ENCODE measurements at regions of chr2 and their contacts with region 1.

Region 1: GRCh38 chr2:158034199-158034866 is 67.3 kb upstream of the UPP2 start:
- DNase-seq: no peak
- ATAC-seq: peak in 1 of 2 donors; percentile 50
- H3K4me3 ChIP-seq: no peak overlapping the region
- H3K27ac ChIP-seq: no peak overlapping the region
- H3K4me1 ChIP-seq: no peaks in the 10 kb centered on the region
- H3K27me3 ChIP-seq: no peaks in the 10 kb centered on the region
- CTCF ChIP-seq: peak in 2 of 5 experiments; percentile 18 to 19
- POLR2A ChIP-seq: no peak

Region 2: DNA sequence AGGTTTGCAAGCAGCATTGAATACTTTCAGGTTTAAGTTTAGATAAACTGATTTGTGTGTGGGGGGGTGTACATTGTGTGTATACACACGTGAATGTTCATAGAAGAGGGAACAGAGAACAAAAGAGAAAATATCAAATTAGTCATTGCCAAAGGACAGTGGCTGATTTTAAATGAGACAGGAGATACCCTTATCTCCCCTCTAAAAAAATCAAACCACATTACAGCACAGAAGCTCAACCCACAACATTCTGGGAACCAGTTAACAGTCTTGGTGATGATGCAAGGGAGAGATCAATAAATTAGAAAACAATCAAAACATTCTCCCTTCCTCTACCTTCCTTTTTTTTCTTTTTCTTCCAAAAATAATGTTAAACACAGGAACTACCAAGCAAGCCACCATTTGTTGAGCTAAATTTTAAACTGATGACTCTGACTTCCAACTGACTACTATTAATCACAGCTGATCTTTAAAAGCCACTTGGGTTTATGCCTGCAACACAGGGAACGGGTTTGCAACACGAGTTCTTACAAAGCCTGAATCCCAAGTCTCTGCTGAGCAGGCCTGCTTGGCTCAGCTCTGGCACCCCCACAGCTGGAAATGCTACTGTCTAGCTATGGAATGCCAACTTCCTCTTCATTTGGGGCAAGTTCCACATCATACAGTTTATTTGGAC is 286.5 kb before region 1 on chr2:
- in situ Hi-C with region 1: no loop called
- intact Hi-C with region 1: no loop called
- DNase-seq: peak; percentile 34 to 55
- ATAC-seq: peak; percentile 79 to 82
- H3K4me3 ChIP-seq: no peak overlapping the region
- H3K27ac ChIP-seq: peak overlapping the region; percentile 3 to 71 (median 32)
- H3K4me1 ChIP-seq: peaks cover 33 to 64% of the 10 kb centered on the region in 2 donors
- H3K27me3 ChIP-seq: no peaks in the 10 kb centered on the region
- CTCF ChIP-seq: no peak
- POLR2A ChIP-seq: no peak

Region 3: GRCh38 chr2:157952558-157952957 is 81.8 kb before region 1 on chr2:
- in situ Hi-C with region 1: no loop called
- intact Hi-C with region 1: no loop called
- DNase-seq: no peak
- ATAC-seq: no peak
- H3K4me3 ChIP-seq: no peak overlapping the region
- H3K27ac ChIP-seq: no peak overlapping the region
- H3K4me1 ChIP-seq: no peaks in the 10 kb centered on the region
- H3K27me3 ChIP-seq: no peaks in the 10 kb centered on the region
- CTCF ChIP-seq: no peak
- POLR2A ChIP-seq: no peak

Region 4: GRCh38 chr2:158060862-158061435 is 26.6 kb after region 1 on chr2:
- in situ Hi-C with region 1: no loop called
- intact Hi-C with region 1: no loop called
- DNase-seq: no peak
- ATAC-seq: no peak
- H3K4me3 ChIP-seq: no peak overlapping the region
- H3K27ac ChIP-seq: no peak overlapping the region
- H3K4me1 ChIP-seq: no peaks in the 10 kb centered on the region
- H3K27me3 ChIP-seq: no peaks in the 10 kb centered on the region
- CTCF ChIP-seq: no peak
- POLR2A ChIP-seq: no peak

Region 5: GRCh38 chr2:158745044-158745865 is 710.9 kb after region 1 on chr2:
- in situ Hi-C with region 1: loop called (anchors 5 to 10 kb)
- intact Hi-C with region 1: no loop called
- DNase-seq: no peak
- ATAC-seq: peak in 1 of 2 donors; percentile 45
- H3K4me3 ChIP-seq: no peak overlapping the region
- H3K27ac ChIP-seq: no peak overlapping the region
- H3K4me1 ChIP-seq: peaks cover 2 to 11% of the 10 kb centered on the region in 2 donors
- H3K27me3 ChIP-seq: no peaks in the 10 kb centered on the region
- CTCF ChIP-seq: peak in 2 of 5 experiments; percentile 26 to 31
- POLR2A ChIP-seq: no peak

Region 6: DNA sequence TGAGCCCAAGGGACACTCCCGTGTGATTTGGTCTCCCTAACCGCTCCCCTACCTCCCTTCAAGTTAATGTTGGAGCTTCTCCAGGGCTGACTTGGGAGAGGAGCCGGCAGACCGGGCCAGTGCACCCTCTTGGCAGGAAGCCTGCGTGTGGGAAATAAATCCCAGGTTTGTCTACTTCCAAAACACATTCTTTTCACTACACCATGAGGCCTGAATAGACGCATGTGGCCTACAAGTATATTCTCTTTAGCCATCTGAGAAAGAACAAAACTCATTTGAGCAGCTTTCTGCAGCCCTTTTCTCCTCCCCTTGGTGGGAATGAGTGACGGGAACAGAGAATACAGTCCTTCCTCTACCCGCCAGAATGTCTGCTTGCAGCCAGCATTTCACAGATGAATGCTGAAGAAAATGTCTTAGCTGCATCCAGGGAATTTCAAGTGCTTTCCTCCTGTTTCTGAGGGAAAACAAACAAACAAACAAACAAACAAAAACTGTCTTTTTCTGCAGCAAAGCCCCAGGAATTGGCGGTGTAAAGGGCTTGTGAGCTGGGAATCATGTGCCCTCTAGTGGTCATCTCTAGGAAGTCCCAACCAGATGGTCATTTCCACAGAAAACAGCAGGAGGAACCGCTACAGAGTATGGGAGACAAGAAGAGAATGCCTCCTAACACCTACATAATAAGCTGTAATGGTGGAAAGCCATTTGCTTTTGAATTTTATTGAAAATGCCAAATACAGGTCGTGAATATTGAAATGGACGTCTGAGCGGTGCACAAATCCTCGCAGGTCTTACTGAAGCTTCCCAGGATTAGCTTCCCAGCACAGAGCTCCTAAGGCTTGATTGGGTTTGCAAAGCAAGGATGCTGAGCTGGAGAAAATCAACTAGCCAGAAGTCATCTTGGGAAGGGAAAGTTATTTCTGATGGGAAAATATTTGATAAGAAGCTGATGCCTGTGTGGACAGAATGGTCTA is 719.6 kb after region 1 on chr2:
- in situ Hi-C with region 1: loop called (anchors 5 to 10 kb)
- intact Hi-C with region 1: no loop called
- DNase-seq: no peak
- ATAC-seq: peak; percentile 88 to 91
- H3K4me3 ChIP-seq: peak overlapping the region; percentile 37 to 46 (median 42)
- H3K27ac ChIP-seq: no peak overlapping the region
- H3K4me1 ChIP-seq: peaks cover 4% of the 10 kb centered on the region in 2 donors
- H3K27me3 ChIP-seq: no peaks in the 10 kb centered on the region
- CTCF ChIP-seq: peak; percentile 74 to 89 (median 77)
- POLR2A ChIP-seq: no peak

Measured in gastrocnemius medialis (tissue), 4 donors.